Right ventricle myocardium inferior (tissue), 1 donor: ENCODE measurements at regions of chr7 and their contacts with region 1.

Region 1: GRCh38 chr7:94449148-94449725 is 54.5 kb downstream of the COL1A2 start:
- DNase-seq: no peak
- ATAC-seq: peak; percentile 32

Region 2: GRCh38 chr7:94509879-94510581 is 60.8 kb after region 1 on chr7:
- intact Hi-C with region 1: loop called (anchors 5 kb)
- DNase-seq: peak; percentile 86
- ATAC-seq: peak; percentile 87

Region 3: DNA sequence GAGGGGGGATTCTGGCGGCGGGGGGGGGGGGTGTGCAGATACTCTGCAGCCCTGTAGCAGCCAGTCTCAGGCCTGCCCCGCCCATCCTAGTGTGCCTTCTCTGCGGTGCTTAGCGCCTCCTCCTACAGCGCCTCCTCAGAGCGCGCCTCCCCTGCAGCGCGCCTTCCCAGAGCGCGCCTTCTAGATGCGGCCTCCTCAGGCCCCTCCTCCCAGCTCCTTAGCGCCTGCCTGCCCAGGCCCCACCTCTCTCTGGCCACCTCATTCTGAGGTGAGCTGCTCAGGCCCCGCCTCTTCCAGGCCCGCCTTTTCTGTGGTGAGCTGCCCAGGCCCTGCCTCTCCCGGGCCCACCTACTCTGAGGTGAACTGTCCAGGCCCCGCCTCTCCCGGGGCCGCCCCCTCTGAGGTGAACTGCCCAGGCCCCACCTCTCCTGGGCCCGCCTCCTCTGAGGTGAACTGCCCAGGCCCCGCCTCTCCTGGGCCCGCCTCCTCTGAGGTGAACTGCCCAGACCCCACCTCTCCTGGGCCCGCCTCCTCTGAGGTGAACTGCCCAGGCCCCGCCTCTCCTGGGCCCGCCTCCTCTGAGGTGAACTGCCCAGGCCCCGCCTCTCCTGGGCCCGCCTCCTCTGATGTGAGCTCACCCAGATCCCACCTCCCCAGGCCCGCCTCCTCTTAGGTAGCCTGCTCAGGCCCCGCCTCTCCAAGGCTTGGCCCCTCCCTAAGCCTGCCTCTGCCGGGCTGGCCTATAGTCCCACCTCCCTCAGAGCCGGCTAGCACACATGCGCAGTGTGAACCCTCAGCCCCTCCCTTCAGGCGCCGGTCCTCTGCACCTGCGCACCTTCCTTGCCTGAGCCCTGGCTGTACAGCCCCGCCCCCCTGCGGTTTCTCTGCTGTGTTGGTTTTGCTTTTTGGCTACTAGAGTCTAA is 208.8 kb after region 1 on chr7:
- intact Hi-C with region 1: loop called (anchors 2 kb)
- DNase-seq: peak; percentile 97
- ATAC-seq: peak; percentile 96

Region 4: GRCh38 chr7:95199779-95200558 is 750.7 kb after region 1 on chr7:
- intact Hi-C with region 1: loop called (anchors 5 kb)
- DNase-seq: no peak
- ATAC-seq: peak; percentile 69

Region 5: GRCh38 chr7:95250571-95250970 is 801.3 kb after region 1 on chr7:
- intact Hi-C with region 1: loop called (anchors 10 kb)
- DNase-seq: no peak
- ATAC-seq: no peak